Heart left ventricle (tissue), 16 donors: ENCODE measurements at regions of chr1 and their contacts with region 1.

Region 1: DNA sequence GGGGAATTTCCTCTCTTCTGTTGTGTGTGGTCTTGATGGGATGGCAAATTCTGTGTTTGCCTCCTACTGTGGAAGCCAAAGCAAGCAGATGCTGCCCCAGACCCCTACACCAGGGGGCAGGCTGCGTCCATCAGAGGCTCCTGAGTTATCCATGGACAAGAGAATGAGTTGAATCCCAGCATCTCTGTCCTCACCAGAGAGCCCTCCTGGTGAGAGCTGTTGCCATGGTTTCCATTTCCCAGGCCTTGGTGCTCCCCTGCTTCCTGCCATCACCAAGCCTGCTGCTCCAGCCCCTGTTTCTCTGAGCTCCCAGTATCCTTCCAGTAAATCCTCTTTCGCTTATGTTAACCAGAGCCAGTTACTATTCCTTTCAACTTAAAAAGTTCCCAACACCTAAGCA is 20.4 kb upstream of the GNG12 start:
- DNase-seq: peak; percentile 38 to 75 (median 47)
- ATAC-seq: peak; percentile 56 to 85 (median 76)
- H3K4me3 ChIP-seq: no peak overlapping the region
- H3K27ac ChIP-seq: no peak overlapping the region
- H3K4me1 ChIP-seq: peaks cover 0 to 15% (median 10%) of the 10 kb centered on the region in 12 donors
- H3K27me3 ChIP-seq: no peaks in the 10 kb centered on the region
- CTCF ChIP-seq: peak; percentile 53 to 80 (median 70)
- POLR2A ChIP-seq: no peak

Region 2: DNA sequence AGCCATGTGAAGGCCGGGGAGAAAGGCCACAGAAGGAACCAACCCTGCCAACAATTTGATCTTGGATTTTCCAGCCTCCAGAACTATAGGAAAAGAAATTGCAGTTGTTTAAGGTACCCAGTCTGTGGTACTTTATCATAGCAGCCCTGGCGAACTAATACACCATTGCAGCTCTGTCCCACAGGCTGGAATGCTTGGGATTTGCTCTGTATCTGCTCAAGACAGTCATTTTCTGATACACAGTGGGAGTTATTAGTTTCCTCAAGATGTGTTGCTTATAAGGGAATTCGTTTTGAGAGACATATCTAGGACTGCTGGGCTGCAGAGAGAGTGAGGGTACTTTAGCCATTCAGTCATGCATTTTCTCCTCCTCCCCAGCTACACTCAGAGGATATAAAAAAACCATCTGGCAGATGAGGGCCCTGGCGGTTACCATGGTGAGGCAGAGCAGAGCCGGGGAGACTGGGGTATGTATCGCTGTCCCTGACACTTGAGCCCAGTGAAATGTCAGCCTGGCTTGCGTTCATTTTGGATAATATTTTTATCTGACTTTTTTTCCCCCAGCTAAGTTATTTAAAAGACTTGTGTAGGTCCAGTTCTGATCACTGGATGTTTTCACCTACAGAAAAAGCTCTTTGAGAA is 92.2 kb after region 1 on chr1:
- intact Hi-C with region 1: loop called in 1 of 10 experiments (anchors 10 kb)
- DNase-seq: peak in 4 of 5 donors; percentile 37 to 64 (median 54)
- ATAC-seq: peak; percentile 82 to 94 (median 90)
- H3K4me3 ChIP-seq: no peak overlapping the region
- H3K27ac ChIP-seq: peak overlapping the region in 7 of 12 donors; percentile 38 to 76 (median 54)
- H3K4me1 ChIP-seq: peaks cover 0 to 24% (median 5%) of the 10 kb centered on the region in 12 donors
- H3K27me3 ChIP-seq: no peaks in the 10 kb centered on the region
- CTCF ChIP-seq: no peak
- POLR2A ChIP-seq: no peak

Region 3: GRCh38 chr1:68010090-68010489 is 156.4 kb after region 1 on chr1:
- intact Hi-C with region 1: loop called (anchors 2 to 5 kb)
- DNase-seq: no peak
- ATAC-seq: peak in 2 of 4 donors; percentile 47 to 64
- H3K4me3 ChIP-seq: no peak overlapping the region
- H3K27ac ChIP-seq: no peak overlapping the region
- H3K4me1 ChIP-seq: no peaks in the 10 kb centered on the region
- H3K27me3 ChIP-seq: no peaks in the 10 kb centered on the region
- CTCF ChIP-seq: peak in 10 of 12 donors; percentile 17 to 55 (median 38)
- POLR2A ChIP-seq: no peak

Region 4: GRCh38 chr1:68051475-68051874 is 197.8 kb after region 1 on chr1:
- intact Hi-C with region 1: loop called in 3 of 10 experiments (anchors 2 to 5 kb)
- DNase-seq: peak; percentile 40 to 74 (median 72)
- ATAC-seq: peak; percentile 62 to 90 (median 84)
- H3K4me3 ChIP-seq: peak overlapping the region in 11 of 12 donors; percentile 7 to 58 (median 46)
- H3K27ac ChIP-seq: no peak overlapping the region
- H3K4me1 ChIP-seq: no peaks in the 10 kb centered on the region
- H3K27me3 ChIP-seq: peaks cover 0 to 12% (median 0%) of the 10 kb centered on the region in 9 donors
- CTCF ChIP-seq: peak in 8 of 12 donors; percentile 6 to 48 (median 24)
- POLR2A ChIP-seq: no peak

Region 5: GRCh38 chr1:68111519-68112436 is 258.1 kb after region 1 on chr1:
- intact Hi-C with region 1: loop called (anchors 1 to 5 kb)
- DNase-seq: peak; percentile 57 to 80 (median 70)
- ATAC-seq: peak; percentile 82 to 91 (median 88)
- H3K4me3 ChIP-seq: no peak overlapping the region
- H3K27ac ChIP-seq: no peak overlapping the region
- H3K4me1 ChIP-seq: peaks cover 0 to 28% (median 16%) of the 10 kb centered on the region in 12 donors
- H3K27me3 ChIP-seq: no peaks in the 10 kb centered on the region
- CTCF ChIP-seq: peak; percentile 25 to 73 (median 48)
- POLR2A ChIP-seq: no peak

Region 6: DNA sequence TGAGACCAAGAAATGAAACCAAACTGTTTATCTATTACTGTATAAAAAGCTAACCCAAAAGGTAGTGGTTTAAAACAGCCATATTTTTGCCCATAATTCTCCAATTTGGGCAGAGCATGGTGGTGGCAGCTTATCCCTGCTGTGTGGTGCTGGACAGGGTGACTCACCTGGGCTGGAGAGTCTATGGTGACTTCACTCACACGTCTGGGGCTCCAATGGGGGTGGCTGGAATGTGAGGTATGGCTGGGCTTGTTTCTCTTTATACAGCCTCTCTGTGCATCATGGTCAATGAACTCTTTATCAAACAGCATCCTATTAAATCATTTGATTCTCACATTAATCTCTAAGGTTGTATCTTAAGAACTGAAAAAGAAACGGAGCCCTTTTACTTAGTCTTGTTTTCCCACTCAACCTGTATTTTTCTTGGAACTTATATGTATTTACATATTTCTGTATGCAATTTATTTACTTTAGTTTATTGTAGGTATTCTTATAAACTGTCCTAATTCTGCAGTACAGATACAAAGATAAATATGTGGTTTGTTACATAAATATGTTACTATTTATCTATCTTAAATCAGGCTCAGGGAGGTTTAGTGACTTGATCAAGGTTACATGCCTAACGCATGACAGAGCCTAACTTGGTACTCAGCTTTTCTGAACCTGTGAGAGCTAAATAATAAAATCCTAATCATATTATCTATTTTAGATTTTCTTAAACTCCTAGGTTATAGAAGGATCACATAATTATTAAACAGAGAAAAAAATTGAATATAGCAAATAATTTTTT is 416.1 kb after region 1 on chr1:
- intact Hi-C with region 1: no loop called
- DNase-seq: no peak
- ATAC-seq: no peak
- H3K4me3 ChIP-seq: no peak overlapping the region
- H3K27ac ChIP-seq: no peak overlapping the region
- H3K4me1 ChIP-seq: peaks cover 0 to 6% (median 0%) of the 10 kb centered on the region in 12 donors
- H3K27me3 ChIP-seq: no peaks in the 10 kb centered on the region
- CTCF ChIP-seq: no peak
- POLR2A ChIP-seq: no peak

Region 7: DNA sequence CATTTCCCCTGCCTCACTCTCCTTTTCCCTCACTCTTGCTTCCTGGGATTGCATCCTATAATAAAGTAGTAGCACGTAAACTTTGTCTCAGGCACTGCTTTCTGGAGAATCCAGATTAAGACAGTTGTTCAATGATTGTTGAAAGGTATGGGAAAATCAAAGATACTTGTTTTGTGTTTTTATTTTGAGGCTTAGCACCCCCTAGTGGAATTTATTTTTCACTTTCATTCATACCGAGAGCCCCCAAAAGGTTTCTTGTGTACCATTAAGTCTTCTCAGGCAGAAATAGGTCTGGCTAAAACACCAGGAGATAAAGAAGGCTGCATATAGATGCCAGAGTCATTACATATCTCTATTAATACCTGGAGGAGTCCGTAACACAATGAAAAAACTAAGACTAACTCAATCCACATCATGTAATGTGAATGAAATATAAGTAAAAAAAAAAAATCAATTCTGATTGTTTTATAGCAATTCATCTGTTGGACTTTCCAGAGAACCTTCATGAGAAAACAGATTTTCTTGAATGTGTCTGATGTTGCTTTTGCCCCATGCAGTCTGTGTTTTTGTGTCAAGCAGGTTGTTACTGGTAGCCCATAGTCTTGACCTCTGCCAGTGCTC is 492.6 kb after region 1 on chr1:
- intact Hi-C with region 1: loop called (anchors 1 to 10 kb)
- DNase-seq: no peak
- ATAC-seq: peak in 1 of 4 donors; percentile 34
- H3K4me3 ChIP-seq: no peak overlapping the region
- H3K27ac ChIP-seq: no peak overlapping the region
- H3K4me1 ChIP-seq: peaks cover 0 to 5% (median 0%) of the 10 kb centered on the region in 12 donors
- H3K27me3 ChIP-seq: no peaks in the 10 kb centered on the region
- CTCF ChIP-seq: peak; percentile 37 to 67 (median 43)
- POLR2A ChIP-seq: no peak